ENCODE measurements at regions of chr3 and their contacts with region 1.

Region 1: DNA sequence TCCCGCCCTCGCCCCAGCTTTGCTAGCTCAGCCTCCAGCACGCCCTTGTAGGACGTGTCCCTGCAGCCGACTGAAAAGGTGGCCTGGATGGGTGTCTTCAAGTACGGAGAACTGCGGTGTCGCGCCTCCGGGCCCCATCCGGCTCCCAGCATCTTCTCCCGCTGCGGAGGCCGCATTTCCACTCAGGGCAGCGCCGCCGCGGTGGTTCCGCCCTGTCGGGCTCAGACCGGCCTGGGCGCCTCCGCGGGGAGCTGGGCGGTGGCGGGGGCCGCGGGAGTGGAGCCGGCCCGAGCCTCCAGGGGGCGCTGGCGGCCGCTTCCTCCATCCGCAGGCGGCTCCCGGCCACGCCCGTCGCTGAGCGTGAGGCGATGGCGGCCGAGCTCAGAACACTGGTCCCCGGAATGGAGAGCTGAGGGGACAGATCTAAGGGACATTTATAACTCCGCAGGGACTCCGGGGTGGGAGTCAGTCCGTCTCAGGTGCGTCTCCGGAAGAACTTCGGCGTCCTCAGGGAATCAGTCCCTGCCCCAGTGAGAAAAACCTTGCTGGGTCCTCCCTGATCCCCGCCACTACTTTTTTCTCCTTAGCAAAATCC is 13.6 kb upstream of the SMCO1 start:
- DNase-seq: peak; percentile 75 to 79
- ATAC-seq: peak; percentile 99
- H3K4me3 ChIP-seq: peak overlapping the region; percentile 53
- H3K27ac ChIP-seq: peak overlapping the region; percentile 91 to 99
- H3K4me1 ChIP-seq: peaks cover 9% of the 10 kb centered on the region
- CTCF ChIP-seq: peak; percentile 79
- EP300 ChIP-seq: no peak
- POLR2A ChIP-seq: peak; percentile 60
- RAD21 ChIP-seq: peak; percentile 22 to 61; a peak in 4 of 5 replicates

Region 2: GRCh38 chr3:196554205-196554604 is 25.5 kb after region 1 on chr3:
- CTCF ChIA-PET with region 1: interaction called, 18 read pairs
- POLR2A ChIA-PET with region 1: no interaction called
- DNase-seq: no peak
- ATAC-seq: no peak
- H3K4me3 ChIP-seq: no peak overlapping the region
- H3K27ac ChIP-seq: no peak overlapping the region
- H3K4me1 ChIP-seq: no peaks in the 10 kb centered on the region
- CTCF ChIP-seq: no peak
- EP300 ChIP-seq: no peak
- POLR2A ChIP-seq: no peak
- RAD21 ChIP-seq: no peak

Region 3: DNA sequence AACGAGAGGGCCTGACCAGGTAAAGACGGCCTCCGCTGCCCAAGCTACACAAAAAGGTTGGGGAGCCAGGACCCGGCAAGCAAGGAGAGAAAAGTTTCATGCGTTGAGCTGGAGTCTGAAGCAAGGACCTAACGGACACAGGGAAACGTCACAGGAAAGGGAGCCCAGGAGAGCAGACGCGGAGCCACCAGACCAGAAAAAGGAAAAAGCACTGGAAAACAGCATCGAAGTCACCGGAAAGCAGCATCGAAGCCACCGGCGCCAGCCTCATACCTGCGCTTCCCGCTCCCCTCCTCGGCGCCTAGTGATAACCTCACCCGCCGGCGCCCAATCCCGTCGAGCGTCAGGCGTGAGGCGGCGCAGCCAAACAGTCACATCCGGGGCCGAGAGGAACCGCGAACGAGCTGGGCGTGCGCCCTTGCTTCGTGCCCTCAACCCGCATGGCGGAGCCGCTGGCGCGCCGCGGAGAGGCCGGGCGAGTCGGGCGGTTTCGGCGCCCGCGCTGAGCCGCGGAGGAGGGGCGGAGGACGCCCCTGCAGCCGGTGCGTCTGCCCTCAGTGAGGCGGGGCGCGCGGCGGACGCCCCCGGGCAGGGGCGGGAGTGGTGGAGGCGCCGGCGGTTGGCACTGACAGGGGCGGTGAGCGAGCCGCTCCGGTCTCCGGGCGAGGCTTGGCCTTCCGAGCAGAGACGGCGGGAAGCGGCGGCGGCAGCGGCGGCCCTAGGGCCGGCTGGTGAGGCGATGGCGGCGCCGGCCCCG is 39.7 kb after region 1 on chr3 and contains the starts of genes FBXO45 and WDR53:
- CTCF ChIA-PET with region 1: interaction called, 9 read pairs
- POLR2A ChIA-PET with region 1: interaction called, 11 read pairs
- DNase-seq: peak; percentile 84 to 91
- ATAC-seq: peak; percentile 98
- H3K4me3 ChIP-seq: peak within 1 kb of the TSS; percentile 86
- H3K27ac ChIP-seq: peak within 1 kb of the TSS; percentile 79 to 93
- H3K4me1 ChIP-seq: peaks cover 26% of the 10 kb centered on the region
- CTCF ChIP-seq: no peak
- EP300 ChIP-seq: no peak
- POLR2A ChIP-seq: peak; percentile 48
- RAD21 ChIP-seq: no peak
- polyA plus RNA-seq, gene FBXO45: 12.8 and 19.4 TPM in 2 replicates
- polyA plus RNA-seq, gene WDR53: 8.4 and 10.8 TPM in 2 replicates

Region 4: GRCh38 chr3:196684548-196685407 is 156.0 kb after region 1 on chr3:
- CTCF ChIA-PET with region 1: interaction called, 19 read pairs
- POLR2A ChIA-PET with region 1: no interaction called
- DNase-seq: peak; percentile 34 to 39
- ATAC-seq: peak; percentile 59 to 84
- H3K4me3 ChIP-seq: no peak overlapping the region
- H3K27ac ChIP-seq: peak overlapping the region; percentile 36 to 66; a peak in 3 of 6 replicates
- H3K4me1 ChIP-seq: peaks cover 3% of the 10 kb centered on the region; the same call in 1 of the 3 replicates
- CTCF ChIP-seq: peak; percentile 75
- EP300 ChIP-seq: no peak
- POLR2A ChIP-seq: no peak
- RAD21 ChIP-seq: peak; percentile 79 to 83

Region 5: GRCh38 chr3:196749125-196749524 is 220.4 kb after region 1 on chr3:
- CTCF ChIA-PET with region 1: no interaction called
- POLR2A ChIA-PET with region 1: no interaction called
- DNase-seq: no peak
- ATAC-seq: no peak
- H3K4me3 ChIP-seq: no peak overlapping the region
- H3K27ac ChIP-seq: no peak overlapping the region
- H3K4me1 ChIP-seq: 0 out of 3 replicates have a peak, but pooled peaks cover 3% of the 10 kb centered on the region
- CTCF ChIP-seq: no peak
- EP300 ChIP-seq: no peak
- POLR2A ChIP-seq: no peak
- RAD21 ChIP-seq: no peak

Measured in A549 (cell line).